Ovary (tissue), 10 donors: ENCODE measurements at regions of chr10 and their contacts with region 1.

Region 1: DNA sequence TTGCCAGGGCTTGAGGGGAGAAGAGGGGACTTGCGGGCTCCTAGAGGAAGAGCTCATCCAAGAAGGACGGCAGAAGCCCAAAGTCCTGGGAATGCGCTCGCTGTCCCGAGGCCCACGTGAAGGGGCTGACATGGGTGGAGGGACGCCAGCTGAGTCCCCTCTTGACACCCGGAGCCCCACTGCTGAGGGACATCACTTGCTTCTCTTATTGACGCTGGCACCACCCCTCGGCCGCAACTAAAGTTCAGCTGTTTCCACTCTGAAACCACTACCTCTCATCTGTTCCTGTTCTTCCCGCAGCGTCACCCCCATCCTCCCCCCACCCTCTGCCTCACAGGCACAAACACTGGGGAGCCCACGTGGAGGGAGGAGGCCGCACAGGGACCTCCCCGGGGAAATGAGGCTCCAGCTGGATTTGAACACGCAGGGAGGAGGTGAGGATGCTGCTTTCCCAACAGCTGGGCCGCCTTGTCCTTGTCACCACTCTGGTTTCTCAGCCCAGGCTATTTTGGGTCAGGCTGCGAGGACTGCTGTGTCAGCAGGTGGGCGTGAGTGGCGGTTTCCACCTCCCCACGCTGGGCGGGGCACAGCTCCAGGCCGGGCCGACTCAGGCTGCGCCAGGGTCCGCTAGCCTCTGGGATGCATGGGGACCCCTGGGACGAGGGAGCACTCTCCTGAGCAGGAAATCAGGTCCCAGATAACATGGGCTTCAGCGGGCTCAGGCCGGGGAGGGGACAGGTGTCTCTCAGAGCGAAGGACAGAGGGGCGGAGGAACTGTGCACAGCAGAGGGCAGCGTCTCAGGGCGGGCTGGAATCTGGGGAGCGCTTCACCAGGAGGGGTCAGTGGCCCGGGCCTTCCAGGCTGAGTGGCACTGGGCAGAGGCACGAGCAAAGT is 156.3 kb downstream of the ZNF248 start:
- DNase-seq: peak in 1 of 5 donors; percentile 23
- H3K4me3 ChIP-seq: no peak overlapping the region
- H3K27ac ChIP-seq: no peak overlapping the region
- H3K4me1 ChIP-seq: no peaks in the 10 kb centered on the region
- H3K27me3 ChIP-seq: no peaks in the 10 kb centered on the region
- CTCF ChIP-seq: no peak
- EP300 ChIP-seq: no peak
- POLR2A ChIP-seq: no peak

Region 2: GRCh38 chr10:37314862-37315261 is 386.3 kb before region 1 on chr10:
- intact Hi-C with region 1: loop called in 1 of 4 experiments (anchors 10 kb)
- DNase-seq: no peak
- H3K4me3 ChIP-seq: no peak overlapping the region
- H3K27ac ChIP-seq: no peak overlapping the region
- H3K4me1 ChIP-seq: no peaks in the 10 kb centered on the region
- H3K27me3 ChIP-seq: no peaks in the 10 kb centered on the region
- CTCF ChIP-seq: no peak
- EP300 ChIP-seq: no peak
- POLR2A ChIP-seq: no peak